ENCODE measurements at regions of chr19 and their contacts with region 1.

Region 1: GRCh38 chr19:46860125-46860845 is 512 bp upstream of the ARHGAP35 start:
- DNase-seq: peak; percentile 84 to 95 (median 94)
- ATAC-seq: peak; percentile 91
- H3K4me3 ChIP-seq: peak overlapping the region; percentile 92
- H3K4me3 Mint-ChIP-seq: peak overlapping the region in 9 of 10 donors; percentile 70 to 97 (median 92)
- H3K27ac ChIP-seq: peak overlapping the region; percentile 94
- H3K27ac Mint-ChIP-seq: peak overlapping the region; percentile 68 to 98 (median 92)
- H3K4me1 ChIP-seq: peaks cover 24 to 30% of the 10 kb centered on the region in 2 donors
- H3K4me1 Mint-ChIP-seq: peaks cover 13 to 25% (median 19%) of the 10 kb centered on the region in 7 donors
- H3K27me3 ChIP-seq: no peaks in the 10 kb centered on the region
- H3K27me3 Mint-ChIP-seq: no peaks in the 10 kb centered on the region

Region 2: GRCh38 chr19:46529622-46530462 is 330.4 kb before region 1 on chr19:
- CTCF ChIA-PET with region 1: no interaction called
- POLR2A ChIA-PET with region 1: no interaction called
- intact Hi-C with region 1: loop called in 1 of 2 experiments (anchors 10 kb)
- DNase-seq: peak; percentile 57 to 83 (median 73)
- ATAC-seq: peak; percentile 95
- H3K4me3 ChIP-seq: no peak overlapping the region
- H3K4me3 Mint-ChIP-seq: peak overlapping the region in 4 of 10 donors; percentile 1 to 65 (median 32)
- H3K27ac ChIP-seq: no peak overlapping the region
- H3K27ac Mint-ChIP-seq: peak overlapping the region in 7 of 9 donors; percentile 17 to 89 (median 68)
- H3K4me1 ChIP-seq: peaks cover 8 to 19% of the 10 kb centered on the region in 2 donors
- H3K4me1 Mint-ChIP-seq: peaks cover 15 to 35% (median 23%) of the 10 kb centered on the region in 7 donors
- H3K27me3 ChIP-seq: no peaks in the 10 kb centered on the region
- H3K27me3 Mint-ChIP-seq: no peaks in the 10 kb centered on the region

Region 3: GRCh38 chr19:46878613-46879375 is 18.5 kb after region 1 on chr19:
- CTCF ChIA-PET with region 1: no interaction called
- POLR2A ChIA-PET with region 1: no interaction called
- intact Hi-C with region 1: no loop called
- DNase-seq: no peak
- ATAC-seq: no peak
- H3K4me3 ChIP-seq: no peak overlapping the region
- H3K4me3 Mint-ChIP-seq: no peak overlapping the region
- H3K27ac ChIP-seq: no peak overlapping the region
- H3K27ac Mint-ChIP-seq: peak overlapping the region in 1 of 9 donors; percentile 25
- H3K4me1 ChIP-seq: no peaks in the 10 kb centered on the region
- H3K4me1 Mint-ChIP-seq: peaks cover 0 to 16% (median 5%) of the 10 kb centered on the region in 7 donors
- H3K27me3 ChIP-seq: no peaks in the 10 kb centered on the region
- H3K27me3 Mint-ChIP-seq: no peaks in the 10 kb centered on the region

Region 4: DNA sequence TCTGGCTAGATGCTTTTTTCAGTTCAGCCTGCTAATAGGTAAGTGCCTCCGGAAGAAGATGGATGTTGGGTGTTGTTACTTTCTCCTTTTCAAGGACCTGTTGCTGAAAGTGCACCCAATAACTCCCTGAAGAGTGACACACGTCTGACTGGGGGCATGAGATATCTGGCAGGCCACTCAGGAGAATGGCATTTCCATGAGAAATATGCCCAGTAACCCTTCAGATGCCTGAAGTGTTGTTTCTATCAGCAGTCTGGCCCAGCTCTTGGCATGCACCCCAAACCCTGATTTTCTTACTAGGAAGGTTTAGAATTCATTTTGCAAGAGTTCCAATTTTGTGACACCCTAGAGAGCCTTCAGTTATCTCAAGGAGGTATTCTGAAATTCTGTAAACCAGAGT is 72.1 kb after region 1 on chr19:
- CTCF ChIA-PET with region 1: no interaction called
- POLR2A ChIA-PET with region 1: no interaction called
- intact Hi-C with region 1: loop called (anchors 2 to 5 kb)
- DNase-seq: no peak
- ATAC-seq: no peak
- H3K4me3 ChIP-seq: no peak overlapping the region
- H3K4me3 Mint-ChIP-seq: no peak overlapping the region
- H3K27ac ChIP-seq: no peak overlapping the region
- H3K27ac Mint-ChIP-seq: peak overlapping the region in 5 of 9 donors; percentile 2 to 67 (median 54)
- H3K4me1 ChIP-seq: peaks cover 19 to 63% of the 10 kb centered on the region in 2 donors
- H3K4me1 Mint-ChIP-seq: peaks cover 33 to 70% (median 51%) of the 10 kb centered on the region in 7 donors
- H3K27me3 ChIP-seq: no peaks in the 10 kb centered on the region
- H3K27me3 Mint-ChIP-seq: no peaks in the 10 kb centered on the region

Region 5: DNA sequence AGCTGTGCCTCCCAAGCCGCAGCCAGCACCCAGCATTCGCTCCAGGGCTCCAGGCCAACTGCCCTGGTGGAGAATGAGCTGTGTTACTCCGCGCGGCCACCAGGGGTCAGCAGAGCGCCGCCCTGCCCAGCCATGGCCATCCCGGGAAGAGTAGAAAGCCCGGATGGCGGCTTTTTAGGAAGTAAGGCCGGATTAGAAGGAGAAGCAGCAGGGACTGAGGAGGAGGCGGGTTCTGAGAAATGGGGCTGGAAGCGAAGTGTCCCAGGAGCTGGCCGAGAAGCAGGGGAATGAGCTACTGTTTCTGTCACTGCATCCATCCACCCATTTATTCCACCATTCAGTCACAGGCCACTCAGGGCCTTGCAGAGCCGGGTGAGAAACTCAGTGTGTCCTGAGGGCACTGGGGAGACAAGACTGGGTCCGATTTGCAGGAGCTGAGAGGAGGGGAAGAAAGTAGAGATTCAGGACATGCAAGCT is 152.8 kb after region 1 on chr19:
- CTCF ChIA-PET with region 1: interaction called, 6 read pairs
- POLR2A ChIA-PET with region 1: no interaction called
- intact Hi-C with region 1: loop called in 1 of 2 experiments (anchors 1 kb)
- DNase-seq: peak in 8 of 9 donors; percentile 30 to 76 (median 55)
- ATAC-seq: peak; percentile 92
- H3K4me3 ChIP-seq: no peak overlapping the region
- H3K4me3 Mint-ChIP-seq: peak overlapping the region in 1 of 10 donors; percentile 12
- H3K27ac ChIP-seq: no peak overlapping the region
- H3K27ac Mint-ChIP-seq: peak overlapping the region in 1 of 9 donors; percentile 71
- H3K4me1 ChIP-seq: peaks cover 0 to 3% of the 10 kb centered on the region in 2 donors
- H3K4me1 Mint-ChIP-seq: peaks cover 5 to 11% (median 9%) of the 10 kb centered on the region in 7 donors
- H3K27me3 ChIP-seq: no peaks in the 10 kb centered on the region
- H3K27me3 Mint-ChIP-seq: peaks cover 9 to 21% (median 11%) of the 10 kb centered on the region in 5 donors

Region 6: DNA sequence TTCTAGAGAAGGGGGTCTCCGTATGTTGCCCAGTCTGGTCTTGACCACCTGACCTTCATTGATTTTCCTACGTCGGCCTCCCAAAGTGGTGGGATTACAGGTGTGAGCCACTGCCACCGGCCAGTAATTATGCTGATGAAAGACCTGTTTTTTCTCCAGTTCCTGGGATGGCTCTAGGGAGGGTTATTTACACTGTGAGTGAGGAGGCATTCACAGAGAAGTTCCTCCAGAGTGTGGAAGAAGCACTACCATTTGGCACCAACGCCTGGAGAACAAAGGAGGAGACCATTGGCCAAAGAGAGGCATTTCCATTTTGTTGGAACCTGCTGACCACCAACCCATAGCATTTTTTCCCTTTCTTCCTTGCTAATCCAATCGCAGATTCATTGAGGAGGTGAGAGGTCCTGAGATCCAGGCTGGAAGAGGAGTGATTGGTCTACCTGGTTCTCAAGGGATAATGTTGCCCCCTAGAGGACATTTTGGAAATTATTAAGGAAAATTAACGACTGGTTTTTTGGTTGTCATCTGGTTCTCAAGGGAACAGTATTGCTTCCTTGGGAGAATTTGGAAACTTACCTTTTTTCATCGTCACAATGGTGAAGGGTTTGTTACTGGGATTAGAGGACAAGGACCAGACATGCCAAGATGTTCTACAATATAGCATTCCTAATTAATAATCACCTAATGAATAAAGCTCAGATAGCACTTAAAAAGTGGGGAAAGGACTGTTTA is 264.8 kb after region 1 on chr19:
- CTCF ChIA-PET with region 1: no interaction called
- POLR2A ChIA-PET with region 1: no interaction called
- intact Hi-C with region 1: loop called in 1 of 2 experiments (anchors 1 kb)
- DNase-seq: peak in 7 of 9 donors; percentile 31 to 65 (median 53)
- ATAC-seq: peak; percentile 79
- H3K4me3 ChIP-seq: no peak overlapping the region
- H3K4me3 Mint-ChIP-seq: no peak overlapping the region
- H3K27ac ChIP-seq: no peak overlapping the region
- H3K27ac Mint-ChIP-seq: no peak overlapping the region
- H3K4me1 ChIP-seq: peaks cover 0 to 4% of the 10 kb centered on the region in 2 donors
- H3K4me1 Mint-ChIP-seq: peaks cover 0 to 11% (median 7%) of the 10 kb centered on the region in 7 donors
- H3K27me3 ChIP-seq: no peaks in the 10 kb centered on the region
- H3K27me3 Mint-ChIP-seq: peaks cover 0 to 6% (median 0%) of the 10 kb centered on the region in 5 donors

Region 7: DNA sequence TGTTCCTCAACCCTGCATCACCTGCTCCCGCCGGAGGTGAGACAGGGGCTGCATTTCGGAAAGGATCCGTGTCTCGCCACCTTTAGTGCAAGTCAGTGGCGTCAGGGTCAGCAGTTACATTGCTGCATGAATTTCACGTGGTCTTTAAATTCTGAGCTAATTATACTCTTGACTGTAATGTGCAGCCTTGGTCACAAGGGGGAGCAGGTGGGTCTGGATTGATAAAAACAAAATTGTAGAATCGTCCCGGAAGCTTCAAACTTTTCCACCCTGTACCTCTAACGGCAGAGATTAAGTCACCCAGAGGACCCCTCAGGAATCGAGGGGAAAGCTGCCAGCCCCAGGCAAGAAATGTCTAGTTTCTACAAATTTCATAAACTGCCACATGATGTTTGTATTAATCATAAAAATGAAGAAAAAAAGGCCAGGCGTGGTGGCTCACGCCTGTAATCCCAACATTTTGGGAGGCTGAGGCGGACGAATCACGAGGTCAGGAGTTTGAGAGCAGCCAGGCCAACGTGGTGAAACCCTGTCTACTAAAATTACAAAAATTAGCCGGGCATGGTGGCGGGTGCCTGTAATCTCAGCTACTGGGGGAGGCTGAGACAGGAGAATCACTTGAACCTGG is 350.5 kb after region 1 on chr19:
- CTCF ChIA-PET with region 1: no interaction called
- POLR2A ChIA-PET with region 1: no interaction called
- intact Hi-C with region 1: no loop called
- DNase-seq: peak; percentile 51 to 83 (median 76)
- ATAC-seq: peak; percentile 97
- H3K4me3 ChIP-seq: no peak overlapping the region
- H3K4me3 Mint-ChIP-seq: peak overlapping the region in 8 of 10 donors; percentile 5 to 53 (median 18)
- H3K27ac ChIP-seq: peak overlapping the region; percentile 49
- H3K27ac Mint-ChIP-seq: peak overlapping the region; percentile 55 to 88 (median 82)
- H3K4me1 ChIP-seq: peaks cover 8 to 10% of the 10 kb centered on the region in 2 donors
- H3K4me1 Mint-ChIP-seq: peaks cover 8 to 30% (median 14%) of the 10 kb centered on the region in 7 donors
- H3K27me3 ChIP-seq: no peaks in the 10 kb centered on the region
- H3K27me3 Mint-ChIP-seq: no peaks in the 10 kb centered on the region

Region 8: GRCh38 chr19:47370045-47370611 is 509.8 kb after region 1 on chr19:
- CTCF ChIA-PET with region 1: no interaction called
- POLR2A ChIA-PET with region 1: no interaction called
- intact Hi-C with region 1: no loop called
- DNase-seq: no peak
- ATAC-seq: peak; percentile 88
- H3K4me3 ChIP-seq: no peak overlapping the region
- H3K4me3 Mint-ChIP-seq: no peak overlapping the region
- H3K27ac ChIP-seq: no peak overlapping the region
- H3K27ac Mint-ChIP-seq: no peak overlapping the region
- H3K4me1 ChIP-seq: no peaks in the 10 kb centered on the region
- H3K4me1 Mint-ChIP-seq: peaks cover 0 to 8% (median 0%) of the 10 kb centered on the region in 7 donors
- H3K27me3 ChIP-seq: no peaks in the 10 kb centered on the region
- H3K27me3 Mint-ChIP-seq: no peaks in the 10 kb centered on the region

Region 9: DNA sequence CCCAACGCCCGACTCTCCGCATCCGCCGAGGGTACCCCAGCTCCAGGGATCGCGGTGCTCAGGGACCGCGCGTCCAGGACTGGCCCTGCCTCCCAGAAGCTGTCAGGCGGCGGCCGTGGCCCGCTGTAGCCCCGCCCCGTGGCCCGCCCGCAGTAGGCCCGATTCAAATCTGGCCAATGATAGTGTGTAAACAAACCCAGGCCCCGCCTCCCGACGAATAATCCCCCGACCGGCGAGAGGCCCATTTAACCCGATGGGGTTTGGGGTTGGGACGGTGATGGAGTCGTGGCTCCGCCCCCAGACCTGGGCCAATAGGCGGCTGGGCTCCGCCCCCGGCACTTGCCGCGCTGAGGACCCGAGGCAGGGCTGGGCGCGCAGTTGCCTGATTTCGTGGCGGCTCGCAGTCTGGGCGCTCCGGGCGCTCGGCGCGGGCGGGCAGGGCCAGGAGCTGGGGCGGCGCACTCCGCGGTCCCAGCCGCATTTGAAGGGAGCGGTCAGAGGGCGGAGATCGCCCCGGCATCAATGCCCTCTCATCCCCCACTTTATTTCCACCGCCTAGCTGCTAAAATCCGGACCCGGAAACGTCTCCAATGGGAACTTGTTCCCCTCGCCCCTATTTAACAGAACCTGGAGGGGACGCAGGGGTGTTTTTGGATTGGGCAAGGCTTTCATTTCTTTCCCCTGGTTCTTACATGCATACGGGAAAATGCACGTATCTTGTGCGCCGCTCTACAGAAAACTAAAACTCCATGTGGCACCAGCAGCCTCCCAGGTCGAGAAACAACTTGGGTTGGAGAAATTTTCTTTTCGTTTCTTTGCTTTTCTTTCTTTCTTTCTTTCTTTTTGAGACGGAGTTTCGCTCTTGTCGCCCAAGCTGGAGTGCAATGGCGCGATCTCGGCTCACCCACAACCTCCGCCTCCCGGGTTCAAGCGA is 740.2 kb after region 1 on chr19:
- CTCF ChIA-PET with region 1: no interaction called
- POLR2A ChIA-PET with region 1: no interaction called
- intact Hi-C with region 1: loop called in 1 of 2 experiments (anchors 1 kb)
- DNase-seq: peak; percentile 86 to 99 (median 97)
- ATAC-seq: peak; percentile 98
- H3K4me3 ChIP-seq: peak overlapping the region; percentile 93
- H3K4me3 Mint-ChIP-seq: peak overlapping the region; percentile 79 to 91 (median 84)
- H3K27ac ChIP-seq: peak overlapping the region; percentile 81
- H3K27ac Mint-ChIP-seq: peak overlapping the region; percentile 75 to 94 (median 90)
- H3K4me1 ChIP-seq: peaks cover 0 to 7% of the 10 kb centered on the region in 2 donors
- H3K4me1 Mint-ChIP-seq: peaks cover 6 to 43% (median 21%) of the 10 kb centered on the region in 7 donors
- H3K27me3 ChIP-seq: no peaks in the 10 kb centered on the region
- H3K27me3 Mint-ChIP-seq: peaks cover 0 to 2% (median 0%) of the 10 kb centered on the region in 5 donors